ENCODE measurements at regions of chr22 and their contacts with region 1.

Region 1: GRCh38 chr22:35627264-35628041 is 10.3 kb upstream of the MB start:
- DNase-seq: peak; percentile 69
- H3K4me3 ChIP-seq: peak overlapping the region; percentile 49
- H3K27me3 ChIP-seq: no peaks in the 10 kb centered on the region
- CTCF ChIP-seq: peak; percentile 70

Region 2: DNA sequence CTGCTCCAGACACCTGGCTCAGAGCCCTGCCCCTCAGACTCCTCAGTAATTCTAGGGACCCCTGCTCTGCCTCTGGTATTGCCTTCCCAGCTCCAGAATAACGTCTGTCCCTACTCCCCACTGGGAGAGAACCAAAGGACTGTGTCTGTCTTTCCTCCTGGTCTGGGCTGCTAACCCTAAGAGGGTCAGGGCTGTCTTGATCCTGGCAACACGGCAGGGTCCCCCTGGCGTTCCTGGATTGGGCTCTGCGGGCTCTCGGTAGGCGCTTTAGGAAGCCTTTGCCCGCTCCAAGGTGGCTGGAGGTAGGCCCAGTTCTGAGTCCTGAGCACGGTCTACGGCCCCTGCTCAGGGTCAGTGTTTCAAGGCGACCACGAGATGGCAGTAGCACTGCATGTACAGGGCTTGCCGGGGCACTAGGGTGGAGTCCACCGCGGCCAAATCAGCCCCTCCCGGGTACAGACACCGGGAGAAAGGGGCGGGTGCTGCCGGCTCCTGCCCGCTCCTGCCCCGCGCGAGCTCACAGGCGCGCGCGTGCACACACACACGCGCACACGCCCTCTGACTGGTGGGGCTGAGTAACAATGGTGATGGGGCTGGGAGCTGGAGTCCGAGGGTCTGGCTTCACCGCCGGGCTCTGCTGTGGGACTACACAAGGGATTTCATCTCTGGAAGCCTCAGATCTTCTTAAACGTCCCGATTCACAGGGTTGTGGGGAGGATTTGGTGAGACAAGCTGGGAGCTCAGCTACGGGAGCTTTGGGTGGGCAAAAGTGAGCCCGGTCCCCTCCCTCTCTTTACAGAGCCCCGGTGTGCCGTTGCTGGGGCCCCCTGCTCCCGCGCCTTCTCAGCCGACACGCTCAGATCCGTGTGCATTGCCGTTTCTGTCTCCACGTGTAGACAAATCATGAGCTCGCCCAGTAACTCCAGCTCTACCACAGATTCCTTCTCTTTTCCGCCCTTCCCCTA is 276.6 kb before region 1 on chr22:
- CTCF ChIA-PET with region 1: interaction called, 15 read pairs
- POLR2A ChIA-PET with region 1: no interaction called
- DNase-seq: peak; percentile 49
- H3K4me3 ChIP-seq: peak overlapping the region; percentile 53
- H3K27me3 ChIP-seq: no peaks in the 10 kb centered on the region
- CTCF ChIP-seq: peak; percentile 86

Region 3: GRCh38 chr22:35739076-35739930 is 111.8 kb after region 1 on chr22:
- CTCF ChIA-PET with region 1: interaction called, 10 read pairs
- POLR2A ChIA-PET with region 1: no interaction called
- DNase-seq: no peak
- H3K4me3 ChIP-seq: no peak overlapping the region
- H3K27me3 ChIP-seq: no peaks in the 10 kb centered on the region
- CTCF ChIP-seq: 0 out of 2 replicates have a peak, but pooled peaks have one; percentile 21

Region 4: DNA sequence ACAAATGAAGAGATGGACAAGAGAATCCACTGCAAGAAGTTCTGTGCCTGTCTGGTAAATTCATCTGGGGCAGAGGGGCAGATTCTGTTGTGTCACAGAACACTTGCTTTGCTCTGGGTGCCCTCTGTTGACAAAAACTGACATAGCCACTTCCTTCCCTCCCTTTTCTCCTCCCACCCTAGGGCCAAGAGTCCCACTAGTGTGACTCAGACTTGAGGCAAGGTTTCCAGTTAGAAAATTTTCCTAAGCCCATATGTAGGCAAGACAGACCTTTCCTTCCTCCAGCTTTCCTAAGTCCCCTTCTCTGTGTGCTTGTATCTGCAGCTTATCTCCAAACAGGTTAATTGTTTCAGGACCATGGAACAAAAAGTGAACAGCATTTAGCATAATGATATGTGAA is 294.3 kb after region 1 on chr22:
- CTCF ChIA-PET with region 1: interaction called, 21 read pairs
- POLR2A ChIA-PET with region 1: no interaction called
- DNase-seq: peak; percentile 63
- H3K4me3 ChIP-seq: no peak overlapping the region
- H3K27me3 ChIP-seq: no peaks in the 10 kb centered on the region
- CTCF ChIP-seq: peak; percentile 70

Region 5: GRCh38 chr22:36123673-36124630 is 496.5 kb after region 1 on chr22:
- CTCF ChIA-PET with region 1: interaction called, 12 read pairs
- POLR2A ChIA-PET with region 1: no interaction called
- DNase-seq: peak; percentile 58
- H3K4me3 ChIP-seq: peak overlapping the region; percentile 10; the same call in 1 of the 2 replicates
- H3K27me3 ChIP-seq: 0 out of 2 replicates have a peak, but pooled peaks cover 1% of the 10 kb centered on the region
- CTCF ChIP-seq: peak; percentile 99